Dorsolateral prefrontal cortex (tissue), 120 donors: ENCODE measurements at regions of chr10 and their contacts with region 1.

Region 1: DNA sequence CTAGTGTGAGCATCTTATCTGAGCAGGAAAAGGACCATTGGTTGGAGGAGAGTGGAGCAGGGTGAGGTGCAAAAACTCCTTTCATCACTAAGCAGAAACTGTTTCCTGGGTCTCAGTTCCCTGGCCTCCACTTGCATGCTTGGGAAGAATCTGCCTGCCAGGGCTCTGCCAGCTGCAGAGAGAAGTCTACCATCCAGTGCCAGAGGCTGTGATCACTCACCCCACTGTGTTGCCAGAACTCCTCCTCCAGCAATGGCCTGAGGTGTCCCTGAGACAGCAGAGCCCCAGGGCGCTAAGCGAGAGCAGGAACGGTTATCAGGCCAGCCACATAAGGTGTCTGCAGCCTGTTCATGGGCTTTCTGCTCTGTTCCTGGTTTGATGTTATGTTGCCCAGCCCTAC is 991.4 kb downstream of the CCSER2 start:
- DNase-seq: peak in 9 of 10 donors; percentile 45 to 82 (median 74)
- H3K4me3 ChIP-seq: peak overlapping the region in 9 of 59 donors; percentile 2 to 32 (median 26)
- H3K27ac ChIP-seq: peak overlapping the region in 58 of 59 donors; percentile 1 to 92 (median 74)
- H3K27me3 ChIP-seq: no peaks in the 10 kb centered on the region
- CTCF ChIP-seq: no peak

Region 2: GRCh38 chr10:85492684-85493083 is 172.9 kb after region 1 on chr10:
- intact Hi-C with region 1: loop called in 1 of 2 experiments (anchors 10 kb)
- DNase-seq: peak in 6 of 10 donors; percentile 20 to 41 (median 36)
- H3K4me3 ChIP-seq: no peak overlapping the region
- H3K27ac ChIP-seq: peak overlapping the region in 34 of 59 donors; percentile 1 to 94 (median 22)
- H3K27me3 ChIP-seq: no peaks in the 10 kb centered on the region
- CTCF ChIP-seq: no peak